ENCODE measurements at regions of chr20 and their contacts with region 1.

Region 1: GRCh38 chr20:40962730-40963504 is 65.7 kb upstream of the TOP1 start:
- DNase-seq: peak; percentile 83
- ATAC-seq: peak; percentile 85
- H3K4me3 ChIP-seq: no peak overlapping the region
- H3K27ac ChIP-seq: no peak overlapping the region
- H3K4me1 ChIP-seq: peaks cover 17% of the 10 kb centered on the region
- H3K27me3 ChIP-seq: no peaks in the 10 kb centered on the region
- CTCF ChIP-seq: peak; percentile 94

Region 2: DNA sequence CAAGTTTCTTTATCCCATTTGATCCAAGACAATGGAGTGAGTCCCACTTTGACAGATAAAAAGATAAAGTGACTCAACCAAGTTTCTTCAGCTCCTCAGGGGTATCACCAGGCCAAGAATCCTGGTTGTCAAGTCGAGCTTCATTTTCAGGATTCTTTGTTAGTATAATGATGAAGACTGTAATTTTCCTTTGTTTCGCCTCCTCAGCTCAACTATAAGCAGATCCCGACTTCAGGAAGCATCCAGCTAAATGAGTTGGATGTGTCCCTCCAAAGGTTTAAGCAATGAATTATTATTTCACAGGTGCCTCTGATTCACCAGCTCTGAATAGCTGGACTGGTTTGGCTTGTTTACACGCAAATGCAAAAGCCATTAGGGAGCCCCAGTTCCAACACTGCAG is 512.8 kb before region 1 on chr20:
- CTCF ChIA-PET with region 1: no interaction called
- POLR2A ChIA-PET with region 1: no interaction called
- intact Hi-C with region 1: no loop called
- DNase-seq: no peak
- ATAC-seq: no peak
- H3K4me3 ChIP-seq: no peak overlapping the region
- H3K27ac ChIP-seq: no peak overlapping the region
- H3K4me1 ChIP-seq: no peaks in the 10 kb centered on the region
- H3K27me3 ChIP-seq: no peaks in the 10 kb centered on the region
- CTCF ChIP-seq: no peak

Region 3: DNA sequence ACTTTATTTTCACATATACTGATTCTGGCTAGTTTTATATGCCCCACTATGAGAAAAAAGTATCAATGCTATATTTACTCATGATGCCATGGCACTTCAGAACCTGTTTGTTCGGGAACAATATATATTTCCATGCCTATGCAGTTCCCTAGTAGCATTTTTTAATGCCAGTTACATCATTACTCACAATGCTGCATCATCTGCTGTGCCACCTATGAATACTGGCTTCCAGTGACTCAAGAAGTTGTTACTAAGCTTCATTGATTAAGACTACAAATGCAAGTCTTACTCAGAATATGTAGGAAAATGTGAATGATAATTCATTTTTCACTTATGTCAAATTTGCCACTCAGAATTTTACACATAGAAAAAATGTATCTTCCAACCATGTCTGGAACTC is 371.8 kb before region 1 on chr20:
- CTCF ChIA-PET with region 1: no interaction called
- POLR2A ChIA-PET with region 1: no interaction called
- intact Hi-C with region 1: no loop called
- DNase-seq: no peak
- ATAC-seq: no peak
- H3K4me3 ChIP-seq: no peak overlapping the region
- H3K27ac ChIP-seq: no peak overlapping the region
- H3K4me1 ChIP-seq: no peaks in the 10 kb centered on the region
- H3K27me3 ChIP-seq: no peaks in the 10 kb centered on the region
- CTCF ChIP-seq: no peak

Region 4: GRCh38 chr20:40706977-40707582 is 255.8 kb before region 1 on chr20:
- CTCF ChIA-PET with region 1: no interaction called
- POLR2A ChIA-PET with region 1: no interaction called
- intact Hi-C with region 1: loop called (anchors 10 kb)
- DNase-seq: peak; percentile 5
- ATAC-seq: peak; percentile 35; the same call in 1 of the 2 replicates
- H3K4me3 ChIP-seq: no peak overlapping the region
- H3K27ac ChIP-seq: no peak overlapping the region
- H3K4me1 ChIP-seq: no peaks in the 10 kb centered on the region
- H3K27me3 ChIP-seq: peaks cover 57% of the 10 kb centered on the region
- CTCF ChIP-seq: 0 out of 2 replicates have a peak, but pooled peaks have one; percentile 24

Region 5: DNA sequence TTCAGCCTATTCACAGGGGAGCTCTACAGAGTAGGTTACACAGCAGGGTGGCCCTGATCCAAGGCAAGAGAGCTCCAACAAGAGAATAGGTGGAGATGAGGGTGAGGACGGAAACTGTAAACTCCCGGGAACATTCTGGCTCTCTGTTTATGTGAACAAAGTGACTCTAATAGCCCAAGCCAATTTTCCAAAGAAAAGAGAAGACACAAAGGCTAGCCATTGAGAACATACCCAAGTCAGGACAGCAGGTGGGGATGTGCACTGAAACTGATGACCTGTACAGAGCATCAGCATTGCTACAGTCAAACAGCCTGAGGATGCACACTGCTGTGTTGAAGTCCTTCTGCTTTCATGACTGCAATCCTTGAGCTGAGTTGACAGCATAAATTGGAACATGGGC is 70.3 kb before region 1 on chr20:
- CTCF ChIA-PET with region 1: interaction called, 3 read pairs
- POLR2A ChIA-PET with region 1: no interaction called
- intact Hi-C with region 1: loop called (anchors 1 kb)
- DNase-seq: peak; percentile 34
- ATAC-seq: peak; percentile 77
- H3K4me3 ChIP-seq: no peak overlapping the region
- H3K27ac ChIP-seq: no peak overlapping the region
- H3K4me1 ChIP-seq: no peaks in the 10 kb centered on the region
- H3K27me3 ChIP-seq: peaks cover 26% of the 10 kb centered on the region; the same call in 1 of the 2 replicates
- CTCF ChIP-seq: peak; percentile 32; the same call in 1 of the 2 replicates

Region 6: DNA sequence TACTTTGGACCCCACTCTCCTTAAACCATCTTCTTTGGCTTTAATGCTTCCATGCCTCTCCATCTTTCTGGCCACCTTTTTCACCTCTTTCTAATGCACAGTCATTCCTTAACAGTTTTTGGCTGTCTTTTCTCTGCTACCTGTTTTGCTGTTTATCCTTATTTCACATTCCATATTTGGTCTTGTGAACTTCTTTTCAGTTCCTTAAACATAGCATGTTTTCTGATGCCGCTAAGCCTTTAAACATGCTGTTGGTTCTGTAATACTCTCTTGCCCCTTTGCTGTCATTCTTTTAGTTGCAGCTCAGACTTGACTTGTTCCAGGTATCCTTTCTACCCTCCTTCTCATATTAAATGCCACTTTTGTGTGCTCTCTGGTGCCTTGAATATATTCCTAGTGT is 101.5 kb after region 1 on chr20:
- CTCF ChIA-PET with region 1: interaction called, 14 read pairs
- POLR2A ChIA-PET with region 1: no interaction called
- intact Hi-C with region 1: no loop called
- DNase-seq: no peak
- ATAC-seq: no peak
- H3K4me3 ChIP-seq: no peak overlapping the region
- H3K27ac ChIP-seq: no peak overlapping the region
- H3K4me1 ChIP-seq: peaks cover 37% of the 10 kb centered on the region
- H3K27me3 ChIP-seq: no peaks in the 10 kb centered on the region
- CTCF ChIP-seq: no peak

Region 7: DNA sequence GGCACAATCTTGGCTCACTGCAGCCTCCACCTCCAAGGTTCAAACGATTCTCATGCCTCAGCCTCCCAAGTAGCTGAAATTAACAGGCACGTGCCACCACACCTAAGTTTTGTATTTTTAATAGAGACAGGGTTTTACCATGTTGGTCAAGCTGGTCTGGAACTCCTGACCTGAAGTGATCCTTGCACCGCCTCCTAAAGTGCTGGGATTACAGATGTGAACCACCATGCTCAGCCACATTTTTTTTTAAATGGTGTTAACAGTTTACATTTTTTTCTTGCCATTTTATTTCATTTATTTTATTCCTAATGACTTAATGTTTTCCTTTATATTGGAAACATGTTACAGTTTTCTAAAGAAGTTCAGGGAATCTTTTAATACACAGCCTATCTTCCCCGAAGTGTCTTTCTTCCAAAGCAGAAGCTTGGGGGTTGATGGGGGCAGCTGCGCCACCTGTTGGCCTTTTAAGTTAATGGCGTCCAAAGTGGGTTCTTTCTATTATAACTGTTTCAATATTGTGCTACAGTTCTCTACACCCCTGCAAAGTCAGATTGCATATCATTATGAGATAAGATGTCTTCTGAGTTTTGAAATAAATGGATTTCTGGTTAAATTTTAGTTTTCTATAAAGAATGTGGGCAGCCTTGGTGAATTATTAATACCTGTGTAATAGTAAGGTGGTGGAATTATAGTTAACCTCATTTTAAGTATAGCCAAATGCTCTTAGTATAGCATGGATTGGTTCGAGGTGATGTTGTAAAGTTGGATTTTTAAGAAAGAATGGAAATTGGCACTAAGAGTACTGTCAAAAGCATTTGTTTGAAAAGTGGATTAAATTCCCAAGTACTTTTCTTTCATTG is 132.4 kb after region 1 on chr20:
- CTCF ChIA-PET with region 1: interaction called, 3 read pairs
- POLR2A ChIA-PET with region 1: no interaction called
- intact Hi-C with region 1: loop called (anchors 1 kb)
- DNase-seq: peak; percentile 69
- ATAC-seq: peak; percentile 76
- H3K4me3 ChIP-seq: no peak overlapping the region
- H3K27ac ChIP-seq: no peak overlapping the region
- H3K4me1 ChIP-seq: no peaks in the 10 kb centered on the region
- H3K27me3 ChIP-seq: no peaks in the 10 kb centered on the region
- CTCF ChIP-seq: peak; percentile 96